ENCODE measurements at regions of chr1 and their contacts with region 1.

Region 1: DNA sequence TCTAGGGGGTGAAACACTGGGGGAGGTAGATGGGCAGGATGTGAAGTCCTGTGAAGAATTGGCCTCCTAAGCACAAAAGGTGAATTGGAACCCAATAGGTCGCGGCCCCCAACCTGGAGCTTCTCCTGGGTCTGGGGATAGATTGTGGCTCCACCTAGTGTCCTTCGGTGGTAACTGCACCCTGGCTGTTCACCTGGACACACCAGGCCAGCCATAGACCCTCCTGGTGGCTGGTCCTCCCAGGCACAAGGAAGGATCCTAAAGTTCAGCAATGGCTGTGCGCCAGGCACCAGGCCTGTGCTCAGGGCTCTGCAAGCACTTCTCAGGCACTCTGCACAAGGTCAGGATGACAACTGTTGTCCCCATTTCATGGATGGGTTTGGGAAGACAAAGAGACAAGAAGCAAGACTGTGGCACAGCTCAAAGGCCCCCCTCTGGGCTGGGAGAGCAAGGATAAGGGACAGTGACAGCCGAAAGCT is 13.5 kb downstream of the ESPN start:
- DNase-seq: no peak
- H3K4me3 ChIP-seq: no peak overlapping the region
- H3K27ac ChIP-seq: no peak overlapping the region
- H3K27me3 ChIP-seq: peaks cover 25% of the 10 kb centered on the region
- CTCF ChIP-seq: peak; percentile 86

Region 2: DNA sequence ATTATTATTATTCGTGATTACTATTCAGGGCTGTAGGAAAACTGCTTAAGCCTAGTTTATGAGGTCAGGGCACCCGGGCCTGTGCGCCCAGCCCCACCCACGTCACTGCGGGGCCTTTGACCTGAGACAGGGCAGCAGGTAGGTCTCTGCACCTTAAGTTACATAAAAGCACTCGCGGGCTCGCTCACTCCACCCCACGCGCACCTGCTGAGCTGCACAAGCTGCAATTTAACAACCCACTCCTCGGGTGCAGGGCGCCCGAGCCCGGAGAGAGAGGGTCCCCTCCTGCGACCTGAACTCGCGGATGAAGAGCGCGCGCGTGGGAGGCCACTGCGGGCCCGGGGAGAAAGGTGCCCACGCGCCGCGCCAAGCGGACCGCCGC is 202.8 kb before region 1 on chr1:
- CTCF ChIA-PET with region 1: interaction called, 11 read pairs
- POLR2A ChIA-PET with region 1: no interaction called
- DNase-seq: no peak
- H3K4me3 ChIP-seq: peak overlapping the region; percentile 82
- H3K27ac ChIP-seq: no peak overlapping the region
- H3K27me3 ChIP-seq: peaks cover 12% of the 10 kb centered on the region
- CTCF ChIP-seq: no peak

Region 3: GRCh38 chr1:6359216-6360116 is 78.6 kb before region 1 on chr1:
- CTCF ChIA-PET with region 1: interaction called, 38 read pairs
- POLR2A ChIA-PET with region 1: no interaction called
- DNase-seq: peak; percentile 47
- H3K4me3 ChIP-seq: peak overlapping the region; percentile 7
- H3K27ac ChIP-seq: peak overlapping the region; percentile 89
- H3K27me3 ChIP-seq: no peaks in the 10 kb centered on the region
- CTCF ChIP-seq: no peak

Region 4: GRCh38 chr1:6448749-6449631 is 10.9 kb after region 1 on chr1:
- CTCF ChIA-PET with region 1: interaction called, 11 read pairs
- POLR2A ChIA-PET with region 1: no interaction called
- DNase-seq: no peak
- H3K4me3 ChIP-seq: no peak overlapping the region
- H3K27ac ChIP-seq: no peak overlapping the region
- H3K27me3 ChIP-seq: peaks cover 76% of the 10 kb centered on the region
- CTCF ChIP-seq: no peak